Kidney (tissue), 22 donors: ENCODE measurements at regions of chr11 and their contacts with region 1.

Region 1: DNA sequence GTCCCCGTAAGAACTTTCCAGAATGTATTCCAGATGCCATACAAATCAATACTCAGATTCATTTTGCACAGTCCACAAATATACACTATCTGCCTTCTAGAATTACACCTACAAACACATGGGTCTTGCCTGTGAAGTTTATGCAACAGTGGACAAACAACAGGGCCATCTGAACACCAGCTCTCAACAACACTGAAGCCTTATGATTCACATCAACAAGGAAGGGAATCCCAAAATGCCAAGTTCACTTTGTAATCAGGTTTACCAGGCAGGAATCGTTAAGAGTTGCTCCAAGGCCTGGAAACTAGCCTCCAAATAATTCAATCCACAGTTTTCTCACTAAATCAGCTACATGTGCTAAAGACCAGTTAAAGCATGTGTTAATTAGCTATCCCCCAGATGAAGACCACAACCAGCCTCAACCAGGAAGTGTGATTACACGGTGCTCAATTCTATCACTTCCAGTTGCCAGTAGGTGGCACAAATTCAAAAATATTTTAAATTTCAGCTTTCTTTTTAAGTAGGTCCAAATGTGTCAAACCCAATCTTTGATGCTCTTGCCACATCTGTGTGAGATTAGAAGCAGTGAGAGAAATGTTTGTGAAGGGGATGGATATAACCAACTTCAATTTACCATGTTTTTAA is 139.1 kb upstream of the BDNF start:
- DNase-seq: peak in 1 of 5 donors; percentile 5
- H3K4me3 ChIP-seq: no peak overlapping the region
- H3K27ac ChIP-seq: no peak overlapping the region
- H3K4me1 ChIP-seq: no peaks in the 10 kb centered on the region
- H3K27me3 ChIP-seq: no peaks in the 10 kb centered on the region
- CTCF ChIP-seq: peak; percentile 13

Region 2: GRCh38 chr11:27954614-27955013 is 115.3 kb after region 1 on chr11:
- intact Hi-C with region 1: no loop called
- DNase-seq: no peak
- H3K4me3 ChIP-seq: no peak overlapping the region
- H3K27ac ChIP-seq: no peak overlapping the region
- H3K4me1 ChIP-seq: no peaks in the 10 kb centered on the region
- H3K27me3 ChIP-seq: no peaks in the 10 kb centered on the region
- CTCF ChIP-seq: no peak

Region 3: DNA sequence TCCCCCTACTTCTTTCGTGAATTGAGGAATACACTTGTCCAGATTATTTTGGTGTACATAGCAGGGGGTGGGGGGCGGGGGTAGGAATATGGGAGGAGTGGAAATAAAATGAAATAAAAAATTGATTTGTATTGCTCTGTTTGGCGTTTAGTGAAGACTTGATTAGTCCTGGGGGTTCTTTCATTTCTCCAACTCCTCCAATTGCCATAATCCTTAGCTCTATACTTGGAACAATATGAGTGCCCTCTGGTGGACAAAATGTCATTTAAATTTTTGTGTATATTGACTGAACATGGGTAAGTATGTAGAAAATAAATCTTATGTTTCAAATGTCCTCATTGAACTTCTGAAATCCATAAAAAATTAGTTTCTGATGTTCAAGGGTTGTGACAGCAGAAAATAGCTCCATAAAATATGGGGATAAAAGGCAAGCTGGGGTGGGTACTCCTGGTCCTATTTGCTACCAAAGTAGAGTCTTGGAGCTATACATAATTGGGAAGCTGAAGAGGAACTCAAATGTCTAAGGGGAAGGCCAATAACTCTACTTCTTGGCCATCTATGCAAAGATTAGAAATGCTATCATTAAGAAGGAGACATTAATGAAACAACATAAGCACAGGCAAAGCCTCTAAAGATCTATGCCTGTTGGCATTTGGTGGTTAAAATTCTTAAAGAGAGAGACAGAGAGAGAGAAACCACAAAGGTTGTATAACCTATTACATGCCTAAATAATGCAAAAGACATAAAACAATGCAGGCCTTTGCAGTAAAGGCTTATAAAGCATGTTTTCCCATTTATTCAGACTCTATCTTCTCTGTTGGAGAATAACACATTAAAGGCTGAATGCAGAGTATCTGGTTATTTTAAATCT is 690.4 kb after region 1 on chr11:
- intact Hi-C with region 1: loop called (anchors 10 kb)
- DNase-seq: peak in 2 of 5 donors; percentile 54 to 69
- H3K4me3 ChIP-seq: no peak overlapping the region
- H3K27ac ChIP-seq: no peak overlapping the region
- H3K4me1 ChIP-seq: no peaks in the 10 kb centered on the region
- H3K27me3 ChIP-seq: no peaks in the 10 kb centered on the region
- CTCF ChIP-seq: peak; percentile 10